HCT116 (cell line): ENCODE measurements at regions of chr20 and their contacts with region 1.

Region 1: DNA sequence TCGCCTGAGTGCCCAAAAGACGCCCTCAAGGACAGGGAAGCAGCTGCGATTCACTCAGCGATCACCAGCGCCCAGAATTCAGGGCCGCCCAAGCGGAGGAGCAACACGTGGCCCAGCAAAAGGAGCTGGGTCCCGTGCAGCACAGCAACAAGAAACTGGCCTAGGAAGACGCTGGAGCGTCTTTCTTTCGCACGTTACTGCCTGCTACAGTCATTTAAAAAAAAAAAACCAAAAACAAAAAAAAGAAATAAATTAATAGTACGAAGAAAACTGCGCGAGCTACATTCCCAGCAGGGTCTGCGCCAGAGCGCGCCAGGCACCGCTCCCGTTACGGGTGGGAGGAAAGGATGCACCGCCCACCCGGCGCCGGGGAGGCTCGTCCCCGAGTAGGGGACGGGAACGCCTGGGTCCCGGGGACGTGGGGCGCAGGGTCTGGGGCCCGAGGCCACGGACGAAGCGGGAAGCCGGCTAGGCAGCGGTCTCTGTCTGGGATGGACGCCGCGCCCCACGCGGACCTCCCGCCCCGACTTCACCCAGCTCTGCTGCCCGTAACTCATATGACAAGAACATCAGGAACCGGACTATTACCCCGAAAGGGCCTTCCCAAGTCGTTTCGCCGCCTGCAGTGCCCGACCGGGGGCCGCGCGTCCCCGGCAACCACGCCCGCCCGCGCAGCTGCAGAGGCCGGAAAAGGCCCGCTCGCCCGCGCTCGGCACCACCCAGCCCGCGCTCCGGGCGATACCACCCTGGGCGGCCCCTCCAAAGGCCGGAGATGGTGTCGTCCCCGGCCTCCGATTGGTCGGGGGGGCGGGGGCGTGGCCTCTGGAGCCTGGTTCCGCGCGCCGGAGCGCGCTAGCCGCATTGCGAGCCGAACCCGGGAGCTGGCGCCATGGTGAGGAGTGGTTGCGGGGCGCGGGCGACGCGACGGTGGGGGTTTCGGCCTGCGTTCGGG is at the start of gene NOP56:
- DNase-seq: peak; percentile 77
- ATAC-seq: peak; percentile 86
- H3K4me3 ChIP-seq: peak within 1 kb of the TSS; percentile 98 to 100
- H3K27ac ChIP-seq: peak within 1 kb of the TSS; percentile 99
- H3K4me1 ChIP-seq: peaks cover 8 to 21% of the 10 kb centered on the region in 2 experiments; a peak in 3 of 4 replicates
- H3K27me3 ChIP-seq: no peaks in the 10 kb centered on the region
- CTCF ChIP-seq: no peak
- POLR2A ChIP-seq: peak; percentile 98
- RAD21 ChIP-seq: no peak
- total RNA-seq, gene NOP56: 582 TPM

Region 2: GRCh38 chr20:2206957-2207769 is 444.9 kb before region 1 on chr20:
- CTCF ChIA-PET with region 1: interaction called, 10 read pairs
- POLR2A ChIA-PET with region 1: interaction called, 3 read pairs
- RAD21 ChIA-PET with region 1: no interaction called
- intact Hi-C with region 1: no loop called
- DNase-seq: peak; percentile 29
- ATAC-seq: peak; percentile 99
- H3K4me3 ChIP-seq: peak overlapping the region; percentile 40 to 56
- H3K27ac ChIP-seq: peak overlapping the region; percentile 11; the same call in 1 of the 2 replicates
- H3K4me1 ChIP-seq: peaks cover 4 to 15% of the 10 kb centered on the region in 2 experiments; a peak in 2 of 4 replicates
- H3K27me3 ChIP-seq: no peaks in the 10 kb centered on the region
- CTCF ChIP-seq: peak; percentile 68 to 84 (median 77)
- POLR2A ChIP-seq: no peak
- RAD21 ChIP-seq: peak; percentile 87

Region 3: GRCh38 chr20:2470423-2471193 is 181.4 kb before region 1 on chr20 and contains the start of gene SNRPB:
- CTCF ChIA-PET with region 1: interaction called, 3 read pairs
- POLR2A ChIA-PET with region 1: interaction called, 11 read pairs
- RAD21 ChIA-PET with region 1: no interaction called
- intact Hi-C with region 1: no loop called
- DNase-seq: peak; percentile 99
- ATAC-seq: peak; percentile 99
- H3K4me3 ChIP-seq: peak within 1 kb of the TSS; percentile 64 to 98
- H3K27ac ChIP-seq: peak within 1 kb of the TSS; percentile 94
- H3K4me1 ChIP-seq: peaks cover 7 to 19% of the 10 kb centered on the region in 2 experiments; a peak in 3 of 4 replicates
- H3K27me3 ChIP-seq: no peaks in the 10 kb centered on the region
- CTCF ChIP-seq: no peak
- POLR2A ChIP-seq: peak; percentile 98
- RAD21 ChIP-seq: no peak
- total RNA-seq, gene SNRPB: 469 TPM

Region 4: GRCh38 chr20:2523919-2524708 is 127.9 kb before region 1 on chr20:
- CTCF ChIA-PET with region 1: interaction called, 22 read pairs
- POLR2A ChIA-PET with region 1: interaction called, 10 read pairs
- RAD21 ChIA-PET with region 1: no interaction called
- intact Hi-C with region 1: loop called (anchors 5 kb)
- DNase-seq: peak; percentile 52
- ATAC-seq: peak; percentile 77
- H3K4me3 ChIP-seq: peak overlapping the region; percentile 60 to 70
- H3K27ac ChIP-seq: peak overlapping the region; percentile 52
- H3K4me1 ChIP-seq: peaks cover 3 to 23% of the 10 kb centered on the region in 2 experiments
- H3K27me3 ChIP-seq: no peaks in the 10 kb centered on the region
- CTCF ChIP-seq: peak; percentile 60 to 98 (median 93)
- POLR2A ChIP-seq: peak; percentile 57
- RAD21 ChIP-seq: peak; percentile 47; the same call in 1 of the 2 replicates

Region 5: DNA sequence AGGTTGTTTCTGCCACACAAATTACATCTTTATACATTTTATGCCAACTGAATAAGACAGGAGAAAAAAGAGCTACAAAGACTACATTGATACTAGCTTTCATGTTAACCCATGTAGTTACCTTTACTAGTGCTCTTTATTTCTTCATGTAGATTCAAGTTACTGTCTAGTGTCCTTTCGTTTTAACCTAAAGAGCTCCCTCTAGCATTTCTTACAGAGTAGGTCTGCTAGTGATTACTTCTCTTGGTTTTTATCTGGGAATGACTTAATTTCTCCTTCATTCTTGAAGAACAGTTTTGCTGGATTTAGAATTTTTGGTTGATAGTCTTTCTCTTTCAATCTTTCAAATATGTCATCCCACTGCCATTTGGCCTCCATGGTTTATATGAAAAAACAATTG is 20.8 kb before region 1 on chr20:
- CTCF ChIA-PET with region 1: interaction called, 14 read pairs
- POLR2A ChIA-PET with region 1: no interaction called
- RAD21 ChIA-PET with region 1: no interaction called
- intact Hi-C with region 1: no loop called
- DNase-seq: no peak
- ATAC-seq: peak; percentile 49; the same call in 1 of the 2 replicates
- H3K4me3 ChIP-seq: no peak overlapping the region
- H3K27ac ChIP-seq: no peak overlapping the region
- H3K4me1 ChIP-seq: peaks cover 13 to 15% of the 10 kb centered on the region in 2 experiments
- H3K27me3 ChIP-seq: no peaks in the 10 kb centered on the region
- CTCF ChIP-seq: peak; percentile 23 to 32 (median 31); a peak in 4 of 6 replicates
- POLR2A ChIP-seq: no peak
- RAD21 ChIP-seq: peak; percentile 49

Region 6: GRCh38 chr20:2637246-2637645 is 14.8 kb before region 1 on chr20:
- CTCF ChIA-PET with region 1: interaction called, 14 read pairs
- POLR2A ChIA-PET with region 1: no interaction called
- RAD21 ChIA-PET with region 1: interaction called in 1 of 2 experiments, 3 read pairs
- intact Hi-C with region 1: no loop called
- DNase-seq: no peak
- ATAC-seq: no peak
- H3K4me3 ChIP-seq: no peak overlapping the region
- H3K27ac ChIP-seq: no peak overlapping the region
- H3K4me1 ChIP-seq: no peaks in the 10 kb centered on the region
- H3K27me3 ChIP-seq: no peaks in the 10 kb centered on the region
- CTCF ChIP-seq: no peak
- POLR2A ChIP-seq: no peak
- RAD21 ChIP-seq: no peak

Region 7: DNA sequence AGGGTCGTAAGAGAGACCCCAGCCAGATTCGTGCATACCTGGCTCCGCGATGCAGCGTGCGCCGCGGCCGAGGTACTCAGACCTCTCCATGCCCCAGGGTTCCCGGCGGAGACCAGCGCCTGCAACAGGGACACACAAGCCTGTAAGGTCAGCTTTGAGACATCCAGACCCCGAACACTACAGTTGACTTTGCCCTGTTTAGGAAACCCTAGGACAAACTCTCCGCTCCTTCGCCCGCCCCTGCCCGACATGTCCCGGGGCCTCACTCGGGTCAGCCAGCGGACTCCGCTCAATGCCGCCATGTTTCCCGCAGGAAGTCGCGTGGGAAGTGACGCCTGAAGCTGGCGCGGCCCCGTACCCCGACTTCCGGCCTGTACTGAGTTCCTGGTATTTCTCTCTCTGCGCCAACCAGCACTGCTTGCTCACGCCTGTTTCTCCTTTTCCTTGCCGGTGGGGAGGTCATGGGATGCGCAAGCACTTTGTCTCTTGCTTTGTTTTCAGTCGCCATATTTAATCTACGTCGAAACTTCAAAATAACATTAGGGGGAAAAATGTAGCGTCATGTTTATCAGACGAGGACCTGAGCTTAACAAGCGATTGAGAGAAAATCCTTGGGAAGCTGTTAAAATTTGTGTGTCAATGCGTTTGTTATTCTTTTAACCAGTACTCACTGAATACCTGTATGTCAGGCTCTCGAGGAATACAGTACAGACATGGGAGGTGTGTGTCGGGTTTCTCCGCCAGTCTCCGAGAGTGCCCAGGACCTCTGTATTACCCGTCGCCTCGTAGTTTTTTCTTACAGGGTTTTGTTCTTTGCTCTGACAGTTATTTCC is 12.1 kb after region 1 on chr20 and contains the start of gene IDH3B:
- CTCF ChIA-PET with region 1: interaction called, 3 read pairs
- POLR2A ChIA-PET with region 1: interaction called, 28 read pairs
- RAD21 ChIA-PET with region 1: no interaction called
- intact Hi-C with region 1: no loop called
- DNase-seq: peak; percentile 71
- ATAC-seq: peak; percentile 88
- H3K4me3 ChIP-seq: peak within 1 kb of the TSS; percentile 74 to 100
- H3K27ac ChIP-seq: peak within 1 kb of the TSS; percentile 63
- H3K4me1 ChIP-seq: peaks cover 5 to 14% of the 10 kb centered on the region in 2 experiments
- H3K27me3 ChIP-seq: no peaks in the 10 kb centered on the region
- CTCF ChIP-seq: no peak
- POLR2A ChIP-seq: peak; percentile 69
- RAD21 ChIP-seq: no peak
- total RNA-seq, gene IDH3B: 132 TPM